RWPE1 (cell line): ENCODE measurements at regions of chr19 and their contacts with region 1.

Region 1: GRCh38 chr19:33186431-33187182 is 7.5 kb upstream of the LRP3 start:
- DNase-seq: no peak
- H3K27ac ChIP-seq: no peak overlapping the region
- CTCF ChIP-seq: no peak

Region 2: GRCh38 chr19:33071887-33072286 is 114.7 kb before region 1 on chr19:
- CTCF ChIA-PET with region 1: no interaction called
- POLR2A ChIA-PET with region 1: no interaction called
- DNase-seq: no peak
- H3K27ac ChIP-seq: no peak overlapping the region
- CTCF ChIP-seq: no peak

Region 3: DNA sequence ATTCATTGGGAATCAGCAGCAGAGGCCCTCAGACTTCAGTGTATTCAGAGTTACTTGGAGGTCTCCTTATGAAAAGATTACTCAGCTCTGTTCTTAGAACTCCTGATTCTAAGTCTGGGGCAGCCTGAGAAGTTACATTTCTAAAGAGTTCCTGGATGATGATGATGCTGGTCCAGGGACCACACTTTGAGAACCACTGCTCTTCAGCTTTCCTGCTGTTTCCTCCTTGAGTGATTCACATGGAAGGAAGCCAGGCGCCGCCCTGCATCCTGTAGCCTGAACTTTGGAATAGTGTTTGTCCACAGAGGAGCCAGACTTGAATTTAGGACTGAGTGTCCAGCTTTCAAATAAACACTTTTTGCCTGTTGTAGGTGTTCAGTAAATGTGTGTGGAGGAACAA is 189.8 kb after region 1 on chr19:
- CTCF ChIA-PET with region 1: interaction called, 11 read pairs
- POLR2A ChIA-PET with region 1: no interaction called
- DNase-seq: peak; percentile 61
- H3K27ac ChIP-seq: no peak overlapping the region
- CTCF ChIP-seq: no peak